A673 (cell line): ENCODE measurements at regions of chr10 and their contacts with region 1.

Region 1: DNA sequence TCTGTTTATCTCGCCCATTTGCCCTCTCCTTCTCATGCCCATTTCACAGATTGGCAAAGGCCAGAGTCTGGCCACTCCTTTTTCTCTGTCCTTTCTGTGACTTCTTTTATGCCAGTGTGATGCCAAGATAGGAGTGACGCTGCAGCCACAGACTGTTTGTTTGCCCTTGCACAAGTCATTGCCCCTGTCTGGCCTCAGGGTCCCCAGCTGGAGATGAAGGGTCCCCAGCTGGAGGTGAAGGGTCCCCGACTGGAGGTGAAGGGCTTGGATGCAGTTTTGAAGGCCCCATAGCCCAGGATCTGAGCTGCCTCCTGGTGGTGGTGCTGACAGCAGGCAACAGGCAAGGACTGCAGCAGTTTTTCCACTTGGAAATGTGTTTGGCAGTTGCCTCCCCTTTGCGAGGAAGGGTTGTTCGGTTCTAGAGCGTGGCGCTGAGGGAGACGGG is 50.8 kb upstream of the SLC29A3 start:
- DNase-seq: no peak
- H3K4me3 ChIP-seq: no peak overlapping the region
- H3K27ac ChIP-seq: peak overlapping the region; percentile 87
- H3K4me1 ChIP-seq: peaks cover 66% of the 10 kb centered on the region
- H3K27me3 ChIP-seq: no peaks in the 10 kb centered on the region
- CTCF ChIP-seq: peak; percentile 62

Region 2: GRCh38 chr10:70404036-70404786 is 864.1 kb before region 1 on chr10 and contains the start of gene EIF4EBP2:
- CTCF ChIA-PET with region 1: no interaction called
- POLR2A ChIA-PET with region 1: interaction called, 12 read pairs
- intact Hi-C with region 1: no loop called
- DNase-seq: peak; percentile 97
- H3K4me3 ChIP-seq: peak within 1 kb of the TSS; percentile 97
- H3K27ac ChIP-seq: peak within 1 kb of the TSS; percentile 96
- H3K4me1 ChIP-seq: peaks cover 12% of the 10 kb centered on the region
- H3K27me3 ChIP-seq: no peaks in the 10 kb centered on the region
- CTCF ChIP-seq: no peak
- total RNA-seq, gene EIF4EBP2: 89.3 and 91.9 TPM in 2 replicates

Region 3: GRCh38 chr10:70935631-70936030 is 332.6 kb before region 1 on chr10:
- CTCF ChIA-PET with region 1: no interaction called
- POLR2A ChIA-PET with region 1: no interaction called
- intact Hi-C with region 1: no loop called
- DNase-seq: no peak
- H3K4me3 ChIP-seq: no peak overlapping the region
- H3K27ac ChIP-seq: no peak overlapping the region
- H3K4me1 ChIP-seq: no peaks in the 10 kb centered on the region
- H3K27me3 ChIP-seq: no peaks in the 10 kb centered on the region
- CTCF ChIP-seq: no peak

Region 4: DNA sequence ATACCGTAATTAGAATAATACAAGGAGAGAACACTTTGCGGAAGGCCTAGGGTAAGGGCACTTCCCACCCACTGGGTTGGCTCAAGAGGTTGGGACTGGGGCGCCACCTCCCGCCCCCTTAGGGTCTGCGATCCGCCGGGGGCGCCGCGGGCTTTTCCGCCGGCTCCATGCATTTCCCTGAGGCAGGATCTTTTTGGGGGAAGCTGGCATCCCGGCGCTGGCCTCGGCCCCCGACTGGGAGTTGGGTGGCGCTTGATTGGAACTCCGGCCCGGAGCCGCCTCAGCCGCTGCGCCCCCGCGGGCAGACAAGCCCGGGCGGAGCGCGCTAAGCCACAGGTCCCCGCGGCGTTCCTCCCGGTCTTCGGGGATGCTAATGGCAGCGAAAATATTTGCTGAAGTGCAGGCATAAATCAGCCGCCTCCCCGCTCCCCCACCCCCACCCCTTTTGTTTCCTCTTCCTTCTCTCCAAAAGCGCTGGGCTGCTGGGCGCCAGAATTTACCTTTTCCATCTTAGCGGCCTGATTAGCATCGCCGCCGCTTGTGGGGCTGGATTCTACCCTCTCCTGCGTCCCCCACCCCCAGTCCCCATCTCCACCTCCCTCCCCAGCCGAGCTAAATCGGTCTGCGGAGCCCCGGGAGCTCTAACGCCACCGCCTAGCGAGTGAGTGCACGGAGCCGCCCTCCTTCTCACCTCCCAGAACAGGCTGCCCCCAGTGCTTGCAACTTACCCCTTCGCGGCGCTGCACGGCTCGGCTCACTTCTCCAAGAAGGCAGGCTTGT is 50.8 kb before region 1 on chr10:
- CTCF ChIA-PET with region 1: no interaction called
- POLR2A ChIA-PET with region 1: no interaction called
- intact Hi-C with region 1: loop called (anchors 5 kb)
- DNase-seq: peak; percentile 63
- H3K4me3 ChIP-seq: peak overlapping the region; percentile 54
- H3K27ac ChIP-seq: peak overlapping the region; percentile 54
- H3K4me1 ChIP-seq: peaks cover 69% of the 10 kb centered on the region
- H3K27me3 ChIP-seq: no peaks in the 10 kb centered on the region
- CTCF ChIP-seq: 0 out of 2 replicates have a peak, but pooled peaks have one; percentile 9

Region 5: GRCh38 chr10:71512775-71513539 is 244.7 kb after region 1 on chr10:
- CTCF ChIA-PET with region 1: no interaction called
- POLR2A ChIA-PET with region 1: no interaction called
- intact Hi-C with region 1: no loop called
- DNase-seq: peak; percentile 26
- H3K4me3 ChIP-seq: no peak overlapping the region
- H3K27ac ChIP-seq: no peak overlapping the region
- H3K4me1 ChIP-seq: no peaks in the 10 kb centered on the region
- H3K27me3 ChIP-seq: no peaks in the 10 kb centered on the region
- CTCF ChIP-seq: no peak